CD4-positive, alpha-beta T cell (primary cell): ENCODE measurements at regions of chr9 and their contacts with region 1.

Region 1: DNA sequence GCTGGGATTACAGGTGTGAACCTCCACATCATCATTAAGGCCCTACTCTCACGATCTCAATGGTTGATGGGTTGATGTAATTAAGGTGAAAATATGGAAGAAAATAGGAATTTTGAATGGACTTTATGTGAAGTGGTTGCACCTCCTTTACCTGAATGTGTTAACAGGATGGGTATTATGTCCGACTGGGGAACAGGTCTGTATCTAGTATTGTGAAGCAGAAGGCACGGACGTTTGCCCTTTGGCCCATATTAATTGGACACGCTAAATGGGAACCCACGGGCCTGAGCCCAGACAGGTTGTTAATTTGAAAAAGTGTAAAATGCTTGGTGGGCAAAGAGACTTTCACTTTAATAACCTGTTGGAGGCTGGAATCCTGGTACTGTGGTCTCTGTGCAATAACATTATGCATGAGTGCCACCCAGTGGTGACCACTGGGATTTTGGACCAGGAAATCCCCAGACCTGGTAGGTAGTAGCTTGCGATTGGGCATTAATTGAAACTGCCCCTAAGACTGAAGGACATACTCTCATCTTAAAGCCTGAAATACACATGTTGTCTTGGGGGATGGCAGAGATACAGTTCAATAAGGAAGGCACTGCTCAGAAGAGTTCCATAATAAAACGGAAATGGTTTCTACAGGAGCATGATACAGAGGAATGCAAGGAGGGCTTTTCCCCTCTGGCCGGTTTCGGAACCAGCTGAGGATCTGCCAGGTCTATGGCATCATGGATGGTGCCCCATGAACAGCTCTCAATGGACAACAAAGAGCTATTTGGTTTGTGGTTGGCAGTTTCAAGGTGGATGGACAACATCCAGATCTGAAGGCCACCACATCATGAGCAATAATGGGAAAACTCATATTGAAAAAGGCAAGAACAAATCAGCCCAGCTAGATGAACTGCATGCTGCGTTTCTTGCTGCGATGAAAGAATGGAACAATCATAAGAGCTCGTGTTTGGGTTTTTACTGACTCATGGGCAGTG is 26.2 kb upstream of the BICD2 start:
- DNase-seq: peak; percentile 61 to 87 (median 74)
- ATAC-seq: peak; percentile 97
- H3K4me3 ChIP-seq: no peak overlapping the region
- H3K4me3 Mint-ChIP-seq: no peak overlapping the region
- H3K27ac ChIP-seq: no peak overlapping the region
- H3K27ac Mint-ChIP-seq: no peak overlapping the region
- H3K4me1 ChIP-seq: peaks cover 5% of the 10 kb centered on the region
- H3K4me1 Mint-ChIP-seq: peaks cover 6% of the 10 kb centered on the region
- H3K27me3 ChIP-seq: no peaks in the 10 kb centered on the region
- H3K27me3 Mint-ChIP-seq: peaks cover 11% of the 10 kb centered on the region
- CTCF ChIP-seq: peak; percentile 91

Region 2: GRCh38 chr9:92140074-92140753 is 650.6 kb before region 1 on chr9:
- CTCF ChIA-PET with region 1: interaction called, 3 read pairs
- POLR2A ChIA-PET with region 1: no interaction called
- intact Hi-C with region 1: loop called (anchors 1 to 2 kb)
- DNase-seq: peak; percentile 49 to 80 (median 58)
- ATAC-seq: peak; percentile 73
- H3K4me3 ChIP-seq: peak overlapping the region; percentile 14
- H3K4me3 Mint-ChIP-seq: peak overlapping the region; percentile 80
- H3K27ac ChIP-seq: no peak overlapping the region
- H3K27ac Mint-ChIP-seq: no peak overlapping the region
- H3K4me1 ChIP-seq: peaks cover 14% of the 10 kb centered on the region
- H3K4me1 Mint-ChIP-seq: peaks cover 10% of the 10 kb centered on the region
- H3K27me3 ChIP-seq: peaks cover 21 to 22% of the 10 kb centered on the region in 2 experiments
- H3K27me3 Mint-ChIP-seq: peaks cover 57% of the 10 kb centered on the region
- CTCF ChIP-seq: peak; percentile 90

Region 3: GRCh38 chr9:92716557-92716956 is 74.3 kb before region 1 on chr9:
- CTCF ChIA-PET with region 1: interaction called, 17 read pairs
- POLR2A ChIA-PET with region 1: no interaction called
- intact Hi-C with region 1: loop called (anchors 1 kb)
- DNase-seq: peak; percentile 70 to 90 (median 82)
- ATAC-seq: peak; percentile 83
- H3K4me3 ChIP-seq: no peak overlapping the region
- H3K4me3 Mint-ChIP-seq: no peak overlapping the region
- H3K27ac ChIP-seq: no peak overlapping the region
- H3K27ac Mint-ChIP-seq: no peak overlapping the region
- H3K4me1 ChIP-seq: peaks cover 18% of the 10 kb centered on the region
- H3K4me1 Mint-ChIP-seq: peaks cover 17% of the 10 kb centered on the region
- H3K27me3 ChIP-seq: no peaks in the 10 kb centered on the region
- H3K27me3 Mint-ChIP-seq: no peaks in the 10 kb centered on the region
- CTCF ChIP-seq: peak; percentile 94

Region 4: DNA sequence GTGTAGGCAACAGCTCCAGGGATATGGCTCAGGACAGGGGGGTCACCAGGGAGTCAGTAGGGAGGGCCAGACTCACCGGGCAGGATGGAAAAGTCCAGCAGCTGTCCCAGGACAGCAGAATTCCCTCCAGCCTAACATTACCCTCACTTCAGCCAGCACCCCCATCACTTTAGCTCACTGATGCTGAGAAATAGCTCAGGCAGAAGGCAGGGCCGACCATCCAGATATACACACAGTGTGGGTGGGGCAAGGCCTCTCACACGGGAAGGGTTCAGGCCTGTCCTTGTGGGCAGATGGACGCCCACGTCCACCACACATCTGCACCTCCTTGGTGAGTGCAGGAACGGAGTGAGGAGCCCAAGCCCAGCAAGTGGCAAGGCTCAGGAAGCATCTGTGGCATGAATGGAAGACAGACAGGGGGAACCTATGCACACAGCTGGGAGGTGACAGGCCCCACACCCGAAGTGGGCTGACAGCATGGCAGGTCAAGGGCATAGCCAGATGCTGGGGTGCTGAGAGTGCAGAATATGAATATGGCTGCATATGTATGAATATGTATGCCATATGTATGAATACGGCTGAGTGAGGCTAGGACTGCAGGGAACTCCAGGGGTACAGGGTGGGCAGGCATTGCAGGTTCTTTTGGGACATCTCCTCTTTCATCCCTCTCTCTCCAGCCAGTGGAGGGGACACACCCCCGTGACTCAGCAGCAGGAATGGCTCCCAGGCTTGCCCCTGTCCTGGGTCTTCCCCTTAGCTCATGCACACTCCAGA is 43.2 kb before region 1 on chr9:
- CTCF ChIA-PET with region 1: no interaction called
- POLR2A ChIA-PET with region 1: no interaction called
- intact Hi-C with region 1: no loop called
- DNase-seq: no peak
- ATAC-seq: no peak
- H3K4me3 ChIP-seq: no peak overlapping the region
- H3K4me3 Mint-ChIP-seq: no peak overlapping the region
- H3K27ac ChIP-seq: no peak overlapping the region
- H3K27ac Mint-ChIP-seq: no peak overlapping the region
- H3K4me1 ChIP-seq: peaks cover 57% of the 10 kb centered on the region
- H3K4me1 Mint-ChIP-seq: peaks cover 81% of the 10 kb centered on the region
- H3K27me3 ChIP-seq: no peaks in the 10 kb centered on the region
- H3K27me3 Mint-ChIP-seq: no peaks in the 10 kb centered on the region
- CTCF ChIP-seq: no peak